Heart right ventricle (tissue), 16 donors: ENCODE measurements at regions of chr3 and their contacts with region 1.

Region 1: GRCh38 chr3:65902304-65902793 is 136.4 kb downstream of the MAGI1 start:
- DNase-seq: no peak
- ATAC-seq: no peak
- H3K4me3 ChIP-seq: no peak overlapping the region
- H3K27ac ChIP-seq: no peak overlapping the region
- H3K4me1 ChIP-seq: peaks cover 0 to 55% (median 17%) of the 10 kb centered on the region in 9 donors
- H3K27me3 ChIP-seq: no peaks in the 10 kb centered on the region
- CTCF ChIP-seq: no peak

Region 2: DNA sequence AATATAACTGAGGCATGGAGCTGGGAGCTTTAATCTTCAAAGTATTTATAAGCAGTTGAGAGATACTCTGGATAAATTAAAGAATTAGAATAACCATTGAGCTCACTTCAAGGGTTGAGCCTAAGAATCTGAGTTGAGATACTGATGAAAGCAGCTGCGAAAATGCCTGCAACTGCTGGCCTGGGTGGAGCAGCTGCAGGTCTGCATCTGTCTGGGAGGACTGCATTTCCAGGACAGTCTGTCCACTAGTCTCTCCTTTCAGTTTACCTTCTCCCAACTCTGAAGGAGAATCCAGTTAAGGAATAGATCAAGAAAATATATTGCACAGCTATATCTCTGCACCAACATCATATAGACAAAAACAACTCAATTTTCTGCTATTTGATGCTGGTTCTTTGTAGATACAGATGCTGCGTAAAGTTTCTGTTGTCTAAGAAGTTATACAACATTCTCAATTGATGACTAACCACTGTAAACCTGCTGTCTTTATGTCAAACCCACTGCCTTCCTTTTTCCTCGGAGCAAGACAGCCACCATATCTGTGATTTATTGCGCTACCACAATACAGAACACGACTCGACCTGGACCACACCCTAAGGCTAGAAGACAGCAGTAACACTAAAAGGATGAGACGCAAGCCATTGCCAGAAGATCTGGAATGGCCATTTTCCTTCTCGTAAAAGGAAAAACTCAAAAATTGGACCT is 108.7 kb before region 1 on chr3:
- intact Hi-C with region 1: loop called in 3 of 10 experiments (anchors 10 kb)
- DNase-seq: no peak
- ATAC-seq: no peak
- H3K4me3 ChIP-seq: no peak overlapping the region
- H3K27ac ChIP-seq: no peak overlapping the region
- H3K4me1 ChIP-seq: peaks cover 0 to 27% (median 0%) of the 10 kb centered on the region in 9 donors
- H3K27me3 ChIP-seq: no peaks in the 10 kb centered on the region
- CTCF ChIP-seq: no peak

Region 3: GRCh38 chr3:66076861-66077470 is 174.6 kb after region 1 on chr3:
- intact Hi-C with region 1: no loop called
- DNase-seq: no peak
- ATAC-seq: peak in 1 of 8 donors; percentile 30
- H3K4me3 ChIP-seq: no peak overlapping the region
- H3K27ac ChIP-seq: no peak overlapping the region
- H3K4me1 ChIP-seq: no peaks in the 10 kb centered on the region
- H3K27me3 ChIP-seq: no peaks in the 10 kb centered on the region
- CTCF ChIP-seq: no peak